Heart left ventricle (tissue), 16 donors: ENCODE measurements at regions of chr22 and their contacts with region 1.

Region 1: GRCh38 chr22:30326706-30327362 is at the start of gene TBC1D10A:
- DNase-seq: peak; percentile 91 to 95 (median 92)
- ATAC-seq: peak; percentile 87 to 97 (median 93)
- H3K4me3 ChIP-seq: peak within 1 kb of the TSS; percentile 64 to 100 (median 94)
- H3K27ac ChIP-seq: peak within 1 kb of the TSS; percentile 48 to 95 (median 88)
- H3K4me1 ChIP-seq: peaks cover under 1 to 51% (median 37%) of the 10 kb centered on the region in 12 donors
- H3K27me3 ChIP-seq: no peaks in the 10 kb centered on the region
- CTCF ChIP-seq: no peak
- POLR2A ChIP-seq: peak in 1 of 2 donors; percentile 96
- total RNA-seq, gene TBC1D10A: 4.3 to 10.1 (median 7.1) TPM

Region 2: GRCh38 chr22:30356449-30357235 is 29.8 kb after region 1 on chr22 and contains the starts of genes CCDC157 and SF3A1:
- intact Hi-C with region 1: loop called in 1 of 10 experiments (anchors 2 kb)
- DNase-seq: peak; percentile 89 to 93 (median 92)
- ATAC-seq: peak; percentile 93 to 99 (median 98)
- H3K4me3 ChIP-seq: peak within 1 kb of the TSS; percentile 57 to 100 (median 83)
- H3K27ac ChIP-seq: peak within 1 kb of the TSS; percentile 92 to 99 (median 97)
- H3K4me1 ChIP-seq: peaks cover 6 to 39% (median 25%) of the 10 kb centered on the region in 12 donors
- H3K27me3 ChIP-seq: no peaks in the 10 kb centered on the region
- CTCF ChIP-seq: peak in 3 of 12 donors; percentile 6 to 23 (median 6)
- POLR2A ChIP-seq: peak in 1 of 2 donors; percentile 90
- total RNA-seq, gene CCDC157: 0.45 to 1.7 (median 1.1) TPM
- total RNA-seq, gene SF3A1: 57.7 to 142 (median 99.2) TPM

Region 3: GRCh38 chr22:30485362-30485988 is 158.6 kb after region 1 on chr22:
- intact Hi-C with region 1: no loop called
- DNase-seq: peak; percentile 34 to 74 (median 60)
- ATAC-seq: peak in 3 of 4 donors; percentile 83 to 96 (median 87)
- H3K4me3 ChIP-seq: no peak overlapping the region
- H3K27ac ChIP-seq: no peak overlapping the region
- H3K4me1 ChIP-seq: no peaks in the 10 kb centered on the region
- H3K27me3 ChIP-seq: peaks cover 0 to 9% (median 0%) of the 10 kb centered on the region in 9 donors
- CTCF ChIP-seq: peak; percentile 85 to 99 (median 94)
- POLR2A ChIP-seq: no peak